ENCODE measurements at regions of chr5 and their contacts with region 1.

Region 1: GRCh38 chr5:126776497-126777256 is at the start of gene LMNB1:
- DNase-seq: peak; percentile 95 to 98 (median 97)
- ATAC-seq: peak; percentile 97 to 98
- H3K4me3 ChIP-seq: peak within 1 kb of the TSS; percentile 89
- H3K27ac ChIP-seq: peak within 1 kb of the TSS; percentile 84
- H3K4me1 ChIP-seq: no peaks in the 10 kb centered on the region
- H3K27me3 ChIP-seq: no peaks in the 10 kb centered on the region
- total RNA-seq, gene LMNB1: 1.2 to 3.6 (median 2.4) TPM

Region 2: DNA sequence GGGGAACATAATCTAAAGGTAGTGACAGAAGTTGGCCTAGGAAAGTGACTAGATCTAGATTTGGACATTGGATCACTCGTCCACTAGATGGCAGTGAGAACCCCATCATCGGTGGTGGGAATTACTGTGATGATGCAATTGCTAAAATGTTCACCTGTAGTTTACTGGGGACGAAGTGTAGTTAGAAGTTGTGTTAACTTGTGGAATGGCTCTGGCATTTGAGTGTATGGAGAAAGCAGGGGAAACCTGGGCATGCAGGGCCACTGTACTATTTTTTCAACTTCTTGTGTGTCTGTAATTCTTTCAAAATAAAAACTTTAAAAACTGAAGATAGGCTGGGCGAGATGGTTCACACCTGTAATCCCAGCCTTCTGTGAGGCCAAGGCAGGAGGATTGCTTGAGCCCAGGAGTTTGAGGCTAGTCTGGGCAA is 100.5 kb before region 1 on chr5:
- intact Hi-C with region 1: loop called (anchors 2 to 10 kb)
- DNase-seq: peak in 2 of 3 donors; percentile 14 to 48
- ATAC-seq: peak; percentile 64 to 75
- H3K4me3 ChIP-seq: no peak overlapping the region
- H3K27ac ChIP-seq: no peak overlapping the region
- H3K4me1 ChIP-seq: no peaks in the 10 kb centered on the region
- H3K27me3 ChIP-seq: no peaks in the 10 kb centered on the region